Colonic mucosa (tissue), 4 donors: ENCODE measurements at regions of chr7 and their contacts with region 1.

Region 1: DNA sequence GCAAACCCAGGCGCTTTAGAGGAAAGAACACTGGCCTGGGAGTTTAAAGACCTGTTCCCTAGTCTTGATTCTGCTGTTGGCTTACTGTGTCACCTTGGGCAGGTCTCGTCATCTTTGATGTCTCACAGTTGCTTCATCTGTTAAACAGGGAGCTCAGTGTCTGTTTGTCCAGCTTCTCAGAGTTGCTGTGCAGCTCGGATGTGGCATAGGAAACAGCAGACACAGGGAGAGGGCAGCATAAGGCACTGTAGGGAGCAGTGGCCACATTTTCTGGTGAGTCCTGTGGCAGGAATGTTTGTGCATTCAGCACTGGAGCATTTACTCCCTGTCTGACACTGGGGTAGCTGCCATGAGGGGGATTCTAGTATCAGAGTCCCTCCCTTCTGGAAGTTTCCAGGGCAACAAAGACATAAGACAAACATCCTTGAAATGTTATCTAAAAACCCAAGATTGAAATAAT is 2.0 kb downstream of the REPIN1 start:
- DNase-seq: no peak
- H3K4me3 ChIP-seq: peak overlapping the region; percentile 65
- H3K27ac ChIP-seq: peak overlapping the region; percentile 97
- H3K4me1 ChIP-seq: peaks cover 11% of the 10 kb centered on the region
- H3K27me3 ChIP-seq: no peaks in the 10 kb centered on the region
- CTCF ChIP-seq: no peak

Region 2: GRCh38 chr7:150325110-150325611 is 45.5 kb before region 1 on chr7:
- intact Hi-C with region 1: loop called (anchors 5 kb)
- DNase-seq: no peak
- H3K4me3 ChIP-seq: no peak overlapping the region
- H3K27ac ChIP-seq: peak overlapping the region; percentile 90
- H3K4me1 ChIP-seq: peaks cover 7% of the 10 kb centered on the region
- H3K27me3 ChIP-seq: no peaks in the 10 kb centered on the region
- CTCF ChIP-seq: no peak